B cell (primary cell): ENCODE measurements at regions of chr7 and their contacts with region 1.

Region 1: GRCh38 chr7:151017953-151018420 is 6.3 kb downstream of the ATG9B start:
- DNase-seq: peak; percentile 83
- ATAC-seq: peak; percentile 68
- H3K4me3 ChIP-seq: peak overlapping the region in 4 of 5 experiments; percentile 34 to 51 (median 42)
- H3K4me3 Mint-ChIP-seq: peak overlapping the region; percentile 91
- H3K27ac ChIP-seq: no peak overlapping the region
- H3K27ac Mint-ChIP-seq: peak overlapping the region; percentile 72
- H3K4me1 ChIP-seq: peaks cover 33 to 44% of the 10 kb centered on the region in 2 donors
- H3K4me1 Mint-ChIP-seq: peaks cover 47% of the 10 kb centered on the region
- H3K27me3 ChIP-seq: peaks cover 0 to 47% (median 21%) of the 10 kb centered on the region in 4 experiments
- H3K27me3 Mint-ChIP-seq: peaks cover 28% of the 10 kb centered on the region
- CTCF ChIP-seq: peak; percentile 98

Region 2: DNA sequence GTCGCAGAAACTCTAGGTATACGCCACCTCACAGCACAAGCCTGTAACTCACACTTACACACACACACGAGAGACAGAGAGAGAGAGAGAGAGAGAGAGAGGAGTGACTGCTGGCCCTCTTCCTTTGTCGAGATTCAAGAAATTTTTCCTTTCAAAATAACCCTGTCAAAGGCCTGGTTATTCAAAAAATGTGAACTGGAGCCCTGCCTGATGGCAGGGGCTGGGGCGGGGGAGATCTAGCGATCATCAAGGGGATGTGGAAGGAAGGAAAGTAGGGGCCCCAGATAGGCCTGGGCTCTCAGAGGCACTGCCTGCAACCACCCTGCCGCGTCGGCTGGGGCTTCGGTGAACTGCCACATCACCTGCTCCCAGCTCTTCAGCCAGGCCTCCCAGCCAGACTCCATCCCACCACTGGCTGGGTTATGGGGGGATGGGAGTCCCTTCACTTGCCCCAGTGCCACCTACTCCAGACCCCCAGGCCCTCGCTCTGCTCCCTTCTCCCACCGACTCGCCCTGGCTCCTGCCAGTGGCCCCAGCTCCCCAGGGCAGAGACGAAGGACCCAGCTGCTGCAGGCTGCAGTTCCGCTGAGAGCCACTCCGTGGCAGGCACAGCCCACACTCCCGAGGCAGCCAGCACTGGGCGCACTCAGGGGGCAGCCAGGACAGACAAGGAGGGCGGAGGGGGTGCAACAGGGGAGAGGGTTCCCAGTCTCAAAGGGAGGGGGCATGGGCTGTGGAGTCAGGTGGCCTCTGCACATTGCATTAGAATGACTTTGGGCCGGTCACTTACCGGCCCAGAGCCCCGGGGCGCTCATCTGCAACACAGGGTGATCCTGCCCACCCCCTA is 55.2 kb before region 1 on chr7:
- CTCF ChIA-PET with region 1: interaction called, 10 read pairs
- POLR2A ChIA-PET with region 1: no interaction called
- intact Hi-C with region 1: loop called (anchors 1 kb)
- DNase-seq: peak; percentile 67
- ATAC-seq: peak; percentile 82
- H3K4me3 ChIP-seq: no peak overlapping the region
- H3K4me3 Mint-ChIP-seq: no peak overlapping the region
- H3K27ac ChIP-seq: no peak overlapping the region
- H3K27ac Mint-ChIP-seq: no peak overlapping the region
- H3K4me1 ChIP-seq: peaks cover 3 to 5% of the 10 kb centered on the region in 2 donors
- H3K4me1 Mint-ChIP-seq: peaks cover 2% of the 10 kb centered on the region
- H3K27me3 ChIP-seq: peaks cover 0 to 49% (median 5%) of the 10 kb centered on the region in 4 experiments
- H3K27me3 Mint-ChIP-seq: peaks cover 48% of the 10 kb centered on the region
- CTCF ChIP-seq: peak; percentile 77

Region 3: DNA sequence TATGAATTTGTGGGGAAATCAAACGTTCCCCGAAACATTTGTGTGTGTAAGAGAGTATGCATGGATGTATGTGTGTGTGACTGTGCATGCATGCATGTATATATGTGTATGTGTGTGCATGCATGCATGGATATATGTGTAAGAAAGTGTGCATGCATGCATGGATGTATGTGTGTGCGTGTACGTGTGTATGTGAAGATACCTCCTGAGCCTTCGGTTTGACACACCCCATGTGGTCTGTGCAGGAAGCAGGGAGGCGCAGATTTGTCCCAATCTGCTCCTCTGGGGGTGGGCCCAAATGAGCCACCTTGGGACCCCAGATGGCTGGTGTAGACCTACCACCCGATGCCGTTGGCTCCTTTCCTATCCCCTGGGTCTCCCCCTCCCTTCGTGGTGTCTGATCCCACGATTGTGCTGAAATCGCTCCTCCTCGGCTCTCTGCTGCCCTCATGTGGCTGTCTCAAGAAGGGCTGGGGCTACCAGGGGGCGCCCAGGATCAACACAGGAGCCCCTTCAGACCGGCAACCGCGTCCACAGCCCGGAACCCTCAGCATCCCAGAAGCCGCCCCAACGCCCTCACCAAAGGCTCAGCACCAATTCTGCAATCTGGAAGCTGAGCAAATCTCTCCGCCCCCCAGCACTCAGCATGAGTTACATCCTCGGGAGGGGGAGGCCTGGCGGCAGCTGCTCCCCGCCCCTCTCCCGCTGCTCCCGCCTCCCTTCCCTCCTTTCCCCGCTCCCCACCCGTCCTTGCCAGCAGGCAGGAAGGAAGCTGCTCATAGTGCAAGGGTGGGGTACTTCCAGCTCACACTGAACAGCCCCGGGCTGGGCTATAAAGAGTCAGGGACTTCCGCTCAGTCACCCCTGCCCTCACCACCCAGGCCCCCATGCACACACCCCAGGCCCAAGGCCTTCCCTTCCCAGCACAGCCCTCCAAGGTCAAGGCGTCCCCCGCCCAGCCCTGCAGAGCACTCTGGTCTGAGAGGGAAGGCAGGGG is 29.5 kb before region 1 on chr7:
- CTCF ChIA-PET with region 1: interaction called, 22 read pairs
- POLR2A ChIA-PET with region 1: no interaction called
- intact Hi-C with region 1: no loop called
- DNase-seq: peak; percentile 68
- ATAC-seq: peak; percentile 48
- H3K4me3 ChIP-seq: no peak overlapping the region
- H3K4me3 Mint-ChIP-seq: no peak overlapping the region
- H3K27ac ChIP-seq: no peak overlapping the region
- H3K27ac Mint-ChIP-seq: no peak overlapping the region
- H3K4me1 ChIP-seq: peaks cover 8 to 10% of the 10 kb centered on the region in 2 donors
- H3K4me1 Mint-ChIP-seq: peaks cover 13% of the 10 kb centered on the region
- H3K27me3 ChIP-seq: peaks cover 0 to 52% (median 10%) of the 10 kb centered on the region in 4 experiments
- H3K27me3 Mint-ChIP-seq: peaks cover 60% of the 10 kb centered on the region
- CTCF ChIP-seq: peak; percentile 72

Region 4: GRCh38 chr7:151057989-151058780 is 40.2 kb after region 1 on chr7:
- CTCF ChIA-PET with region 1: interaction called, 4 read pairs
- POLR2A ChIA-PET with region 1: interaction called, 7 read pairs
- intact Hi-C with region 1: loop called (anchors 5 kb)
- DNase-seq: peak; percentile 98
- ATAC-seq: peak; percentile 92
- H3K4me3 ChIP-seq: peak overlapping the region; percentile 67 to 90 (median 73)
- H3K4me3 Mint-ChIP-seq: peak overlapping the region; percentile 96
- H3K27ac ChIP-seq: peak overlapping the region; percentile 79 to 82
- H3K27ac Mint-ChIP-seq: peak overlapping the region; percentile 94
- H3K4me1 ChIP-seq: peaks cover 23 to 40% of the 10 kb centered on the region in 2 donors
- H3K4me1 Mint-ChIP-seq: peaks cover 36% of the 10 kb centered on the region
- H3K27me3 ChIP-seq: no peaks in the 10 kb centered on the region
- H3K27me3 Mint-ChIP-seq: no peaks in the 10 kb centered on the region
- CTCF ChIP-seq: no peak

Region 5: DNA sequence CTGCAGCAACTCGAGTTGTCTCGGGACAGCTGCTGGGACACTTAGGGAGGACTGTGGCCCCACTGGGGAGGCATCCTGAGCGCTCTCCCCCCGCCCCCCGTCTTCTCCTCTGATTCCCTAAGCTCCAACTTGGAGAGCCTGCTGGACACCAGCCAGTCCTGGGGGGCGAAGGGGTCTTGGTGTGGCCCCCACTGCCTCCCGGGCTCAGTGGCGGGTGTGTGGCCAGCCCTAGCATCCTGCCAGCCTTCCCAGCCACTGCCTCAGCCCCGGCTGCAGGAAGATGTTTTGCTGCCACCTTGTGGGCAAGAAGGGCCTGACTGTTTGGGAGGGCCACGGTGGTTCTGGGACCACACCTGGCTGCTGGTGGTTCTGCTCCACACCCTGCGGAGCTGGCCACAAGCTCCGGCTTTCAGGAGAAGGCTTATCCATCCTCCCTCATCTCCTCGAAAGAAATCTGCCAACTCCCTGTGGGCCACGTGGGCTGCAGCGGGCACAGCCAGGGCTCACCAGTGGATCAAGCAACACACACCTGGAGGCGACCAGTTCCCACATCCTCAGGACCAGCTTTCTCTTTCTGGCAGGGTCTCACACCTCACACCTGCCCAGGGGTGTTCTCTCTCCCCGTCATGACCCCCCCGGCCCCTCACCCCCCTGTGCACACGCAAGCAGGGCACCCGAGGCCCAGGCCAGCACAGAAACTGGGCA is 93.1 kb after region 1 on chr7:
- CTCF ChIA-PET with region 1: interaction called, 6 read pairs
- POLR2A ChIA-PET with region 1: no interaction called
- intact Hi-C with region 1: loop called (anchors 1 kb)
- DNase-seq: peak; percentile 80
- ATAC-seq: peak; percentile 83
- H3K4me3 ChIP-seq: no peak overlapping the region
- H3K4me3 Mint-ChIP-seq: no peak overlapping the region
- H3K27ac ChIP-seq: no peak overlapping the region
- H3K27ac Mint-ChIP-seq: no peak overlapping the region
- H3K4me1 ChIP-seq: peaks cover 0 to 6% of the 10 kb centered on the region in 2 donors
- H3K4me1 Mint-ChIP-seq: peaks cover 2% of the 10 kb centered on the region
- H3K27me3 ChIP-seq: peaks cover 0 to 27% (median 8%) of the 10 kb centered on the region in 4 experiments
- H3K27me3 Mint-ChIP-seq: peaks cover 20% of the 10 kb centered on the region
- CTCF ChIP-seq: peak; percentile 93

Region 6: DNA sequence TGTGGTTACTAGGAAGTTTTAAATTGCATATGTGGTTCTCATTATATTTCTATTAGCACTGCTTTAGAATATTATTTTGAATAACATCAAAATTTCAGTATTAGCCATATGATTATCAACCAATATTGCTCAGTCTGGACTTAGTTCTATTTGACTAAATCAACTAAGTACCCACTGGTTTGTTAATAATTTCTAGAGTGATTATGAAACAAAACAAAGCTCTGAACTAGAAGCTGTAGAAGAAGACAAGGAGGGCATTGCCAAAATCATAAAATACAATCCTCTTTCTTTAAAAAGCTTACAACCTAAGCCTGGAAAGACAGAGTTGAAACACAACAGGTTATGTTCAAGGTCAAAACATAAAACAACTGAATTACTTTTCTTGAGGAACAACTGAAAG is 1213.1 kb after region 1 on chr7:
- CTCF ChIA-PET with region 1: no interaction called
- POLR2A ChIA-PET with region 1: no interaction called
- intact Hi-C with region 1: no loop called
- DNase-seq: no peak
- ATAC-seq: no peak
- H3K4me3 ChIP-seq: no peak overlapping the region
- H3K4me3 Mint-ChIP-seq: no peak overlapping the region
- H3K27ac ChIP-seq: no peak overlapping the region
- H3K27ac Mint-ChIP-seq: no peak overlapping the region
- H3K4me1 ChIP-seq: no peaks in the 10 kb centered on the region
- H3K4me1 Mint-ChIP-seq: peaks cover 7% of the 10 kb centered on the region
- H3K27me3 ChIP-seq: no peaks in the 10 kb centered on the region
- H3K27me3 Mint-ChIP-seq: no peaks in the 10 kb centered on the region
- CTCF ChIP-seq: no peak